B cell (primary cell): ENCODE measurements at regions of chr11 and their contacts with region 1.

Region 1: GRCh38 chr11:3841426-3842350 is 929 bp upstream of the RHOG start:
- DNase-seq: peak; percentile 99
- ATAC-seq: no peak
- H3K4me3 ChIP-seq: peak overlapping the region; percentile 31 to 89 (median 85)
- H3K4me3 Mint-ChIP-seq: peak overlapping the region; percentile 84
- H3K27ac ChIP-seq: peak overlapping the region; percentile 95 to 98
- H3K27ac Mint-ChIP-seq: peak overlapping the region; percentile 98
- H3K4me1 ChIP-seq: peaks cover 39 to 44% of the 10 kb centered on the region in 2 donors
- H3K4me1 Mint-ChIP-seq: peaks cover 48% of the 10 kb centered on the region
- H3K27me3 ChIP-seq: no peaks in the 10 kb centered on the region
- H3K27me3 Mint-ChIP-seq: no peaks in the 10 kb centered on the region
- CTCF ChIP-seq: peak; percentile 81

Region 2: GRCh38 chr11:3631331-3631730 is 210.4 kb before region 1 on chr11:
- CTCF ChIA-PET with region 1: no interaction called
- POLR2A ChIA-PET with region 1: no interaction called
- intact Hi-C with region 1: no loop called
- DNase-seq: no peak
- ATAC-seq: no peak
- H3K4me3 ChIP-seq: no peak overlapping the region
- H3K4me3 Mint-ChIP-seq: no peak overlapping the region
- H3K27ac ChIP-seq: no peak overlapping the region
- H3K27ac Mint-ChIP-seq: no peak overlapping the region
- H3K4me1 ChIP-seq: no peaks in the 10 kb centered on the region
- H3K4me1 Mint-ChIP-seq: peaks cover 2% of the 10 kb centered on the region
- H3K27me3 ChIP-seq: peaks cover 0 to 4% (median 0%) of the 10 kb centered on the region in 4 experiments
- H3K27me3 Mint-ChIP-seq: peaks cover 15% of the 10 kb centered on the region
- CTCF ChIP-seq: no peak

Region 3: GRCh38 chr11:3807909-3808860 is 33.5 kb before region 1 on chr11 and contains the start of gene PGAP2:
- CTCF ChIA-PET with region 1: interaction called, 85 read pairs
- POLR2A ChIA-PET with region 1: interaction called, 19 read pairs
- intact Hi-C with region 1: loop called (anchors 1 kb)
- DNase-seq: peak; percentile 71
- ATAC-seq: peak; percentile 85
- H3K4me3 ChIP-seq: peak within 1 kb of the TSS; percentile 91 to 99 (median 96)
- H3K4me3 Mint-ChIP-seq: peak within 1 kb of the TSS; percentile 98
- H3K27ac ChIP-seq: peak within 1 kb of the TSS; percentile 59 to 60
- H3K27ac Mint-ChIP-seq: peak within 1 kb of the TSS; percentile 92
- H3K4me1 ChIP-seq: peaks cover 6 to 17% of the 10 kb centered on the region in 2 donors
- H3K4me1 Mint-ChIP-seq: peaks cover 11% of the 10 kb centered on the region
- H3K27me3 ChIP-seq: no peaks in the 10 kb centered on the region
- H3K27me3 Mint-ChIP-seq: no peaks in the 10 kb centered on the region
- CTCF ChIP-seq: peak; percentile 61
- total RNA-seq, gene PGAP2: 20.5 and 20.8 TPM in 2 replicates

Region 4: DNA sequence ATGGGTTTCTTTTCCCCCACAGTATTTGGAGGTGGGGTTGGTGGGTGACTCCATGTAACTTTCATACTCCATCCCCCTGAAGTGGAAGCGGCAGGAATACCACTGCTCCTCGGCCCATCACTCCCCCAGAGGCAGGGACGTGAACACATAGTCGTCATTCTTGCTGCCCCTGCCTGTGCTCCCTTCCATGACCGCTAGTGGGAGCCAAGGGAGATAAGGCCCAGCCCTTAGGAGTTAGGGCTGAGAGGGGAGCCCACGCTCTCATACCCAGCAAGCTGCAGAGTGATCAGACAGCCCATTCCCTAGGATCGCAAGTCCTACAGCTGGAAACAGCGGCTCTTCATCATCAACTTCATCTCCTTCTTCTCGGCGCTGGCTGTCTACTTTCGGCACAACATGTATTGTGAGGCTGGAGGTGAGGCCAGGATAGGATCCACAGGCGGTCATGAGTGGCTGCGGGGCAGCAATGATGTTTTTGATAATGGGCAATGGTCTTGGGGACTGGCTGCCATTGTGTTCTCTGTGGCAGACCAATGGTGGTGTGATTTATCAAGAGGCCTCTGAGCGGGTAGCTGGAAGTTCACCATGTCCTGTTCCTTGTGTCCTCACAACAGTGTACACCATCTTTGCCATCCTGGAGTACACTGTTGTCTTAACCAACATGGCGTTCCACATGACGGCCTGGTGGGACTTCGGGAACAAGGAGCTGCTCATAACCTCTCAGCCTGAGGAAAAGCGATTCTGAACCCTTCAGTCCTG is 16.8 kb before region 1 on chr11:
- CTCF ChIA-PET with region 1: interaction called, 33 read pairs
- POLR2A ChIA-PET with region 1: interaction called, 12 read pairs
- intact Hi-C with region 1: loop called (anchors 1 kb)
- DNase-seq: peak; percentile 83
- ATAC-seq: peak; percentile 96
- H3K4me3 ChIP-seq: no peak overlapping the region
- H3K4me3 Mint-ChIP-seq: no peak overlapping the region
- H3K27ac ChIP-seq: peak overlapping the region in 1 of 2 donors; percentile 74
- H3K27ac Mint-ChIP-seq: peak overlapping the region; percentile 69
- H3K4me1 ChIP-seq: peaks cover 13 to 15% of the 10 kb centered on the region in 2 donors
- H3K4me1 Mint-ChIP-seq: peaks cover 26% of the 10 kb centered on the region
- H3K27me3 ChIP-seq: no peaks in the 10 kb centered on the region
- H3K27me3 Mint-ChIP-seq: no peaks in the 10 kb centered on the region
- CTCF ChIP-seq: peak; percentile 81

Region 5: GRCh38 chr11:3831378-3832239 is 10.1 kb before region 1 on chr11:
- CTCF ChIA-PET with region 1: interaction called, 33 read pairs
- POLR2A ChIA-PET with region 1: interaction called, 5 read pairs
- intact Hi-C with region 1: no loop called
- DNase-seq: no peak
- ATAC-seq: no peak
- H3K4me3 ChIP-seq: no peak overlapping the region
- H3K4me3 Mint-ChIP-seq: peak overlapping the region; percentile 42
- H3K27ac ChIP-seq: peak overlapping the region in 1 of 2 donors; percentile 66
- H3K27ac Mint-ChIP-seq: peak overlapping the region; percentile 77
- H3K4me1 ChIP-seq: peaks cover 53 to 61% of the 10 kb centered on the region in 2 donors
- H3K4me1 Mint-ChIP-seq: peaks cover 64% of the 10 kb centered on the region
- H3K27me3 ChIP-seq: no peaks in the 10 kb centered on the region
- H3K27me3 Mint-ChIP-seq: no peaks in the 10 kb centered on the region
- CTCF ChIP-seq: no peak

Region 6: GRCh38 chr11:4094348-4095291 is 252.9 kb after region 1 on chr11 and contains the start of gene RRM1:
- CTCF ChIA-PET with region 1: interaction called, 3 read pairs
- POLR2A ChIA-PET with region 1: interaction called, 9 read pairs
- intact Hi-C with region 1: loop called (anchors 1 kb)
- DNase-seq: peak; percentile 95
- ATAC-seq: peak; percentile 99
- H3K4me3 ChIP-seq: peak within 1 kb of the TSS; percentile 60 to 95 (median 84)
- H3K4me3 Mint-ChIP-seq: peak within 1 kb of the TSS; percentile 94
- H3K27ac ChIP-seq: peak within 1 kb of the TSS; percentile 77 to 86
- H3K27ac Mint-ChIP-seq: peak within 1 kb of the TSS; percentile 98
- H3K4me1 ChIP-seq: peaks cover 14 to 28% of the 10 kb centered on the region in 2 donors
- H3K4me1 Mint-ChIP-seq: peaks cover 43% of the 10 kb centered on the region
- H3K27me3 ChIP-seq: no peaks in the 10 kb centered on the region
- H3K27me3 Mint-ChIP-seq: no peaks in the 10 kb centered on the region
- CTCF ChIP-seq: no peak
- total RNA-seq, gene RRM1: 22.2 and 24.5 TPM in 2 replicates